ENCODE measurements at regions of chr3 and their contacts with region 1.

Region 1: DNA sequence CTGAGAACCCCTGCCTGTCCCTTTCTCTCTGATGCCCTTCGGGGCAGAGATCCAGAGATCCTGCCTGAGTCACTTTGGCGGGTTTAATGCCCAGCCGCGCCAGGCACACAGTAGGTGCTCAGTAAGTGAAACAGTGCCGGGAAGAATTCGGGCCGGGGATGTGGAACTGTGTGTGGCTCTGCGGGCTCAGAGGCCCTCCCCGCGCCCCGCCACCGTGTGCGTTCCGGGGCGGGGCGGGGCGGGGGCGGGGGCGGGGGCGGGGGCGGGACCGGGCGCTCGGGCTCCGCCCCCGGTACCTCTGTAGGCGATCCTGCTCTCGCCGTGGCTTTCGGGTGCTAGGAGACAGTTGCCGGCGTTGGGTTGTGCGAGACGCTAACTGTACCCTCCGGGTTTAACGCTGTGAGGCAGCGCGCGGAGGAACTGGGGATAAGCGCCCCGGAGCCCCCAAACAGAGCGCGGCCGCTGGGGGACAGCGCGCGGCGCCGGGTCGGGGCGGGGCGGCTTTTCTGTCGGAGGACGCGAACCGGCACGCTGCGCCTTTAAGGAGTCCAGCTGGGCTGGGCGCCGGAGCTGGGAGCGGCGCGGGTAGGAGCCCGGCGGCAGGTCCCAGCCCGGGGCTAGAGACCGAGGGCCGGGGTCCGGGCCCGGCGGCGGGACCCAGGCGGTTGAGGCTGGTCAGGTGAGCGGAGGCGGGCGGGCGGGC is at the start of gene ABHD6:
- DNase-seq: peak; percentile 79
- H3K4me3 Mint-ChIP-seq: peak within 1 kb of the TSS; percentile 97
- H3K27ac Mint-ChIP-seq: peak within 1 kb of the TSS; percentile 86
- H3K4me1 Mint-ChIP-seq: peaks cover 25% of the 10 kb centered on the region
- H3K27me3 Mint-ChIP-seq: peaks cover 16% of the 10 kb centered on the region
- total RNA-seq, gene ABHD6: 26.4 and 28.2 TPM in 2 replicates

Region 2: DNA sequence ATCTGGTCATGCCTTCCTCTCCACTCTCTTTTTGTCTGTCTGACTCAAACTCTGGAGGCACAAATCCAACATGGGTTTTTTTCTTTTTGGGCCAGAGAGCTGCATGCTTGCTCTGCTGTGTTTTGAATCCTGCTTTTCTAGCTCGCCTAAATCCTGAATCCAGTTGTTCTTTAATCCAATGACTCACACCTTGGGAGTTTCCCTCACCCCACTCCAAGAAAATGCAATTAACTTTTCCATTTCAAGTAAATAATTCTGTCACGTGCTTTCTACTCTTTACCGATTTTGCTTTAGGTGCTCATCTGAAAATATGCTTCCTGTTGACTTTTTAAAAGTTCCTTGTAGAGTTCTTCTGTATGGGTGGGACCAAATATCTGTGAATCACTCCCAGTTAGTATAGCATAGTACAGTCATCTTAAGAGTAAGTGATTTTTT is 433.7 kb before region 1 on chr3:
- intact Hi-C with region 1: no loop called
- DNase-seq: no peak
- H3K4me3 Mint-ChIP-seq: peak overlapping the region; percentile 49
- H3K27ac Mint-ChIP-seq: peak overlapping the region; percentile 83
- H3K4me1 Mint-ChIP-seq: peaks cover 45% of the 10 kb centered on the region
- H3K27me3 Mint-ChIP-seq: no peaks in the 10 kb centered on the region

Region 3: GRCh38 chr3:58188173-58188564 is 49.2 kb before region 1 on chr3:
- intact Hi-C with region 1: loop called (anchors 5 kb)
- DNase-seq: no peak
- H3K4me3 Mint-ChIP-seq: no peak overlapping the region
- H3K27ac Mint-ChIP-seq: no peak overlapping the region
- H3K4me1 Mint-ChIP-seq: peaks cover 3% of the 10 kb centered on the region
- H3K27me3 Mint-ChIP-seq: no peaks in the 10 kb centered on the region

Region 4: DNA sequence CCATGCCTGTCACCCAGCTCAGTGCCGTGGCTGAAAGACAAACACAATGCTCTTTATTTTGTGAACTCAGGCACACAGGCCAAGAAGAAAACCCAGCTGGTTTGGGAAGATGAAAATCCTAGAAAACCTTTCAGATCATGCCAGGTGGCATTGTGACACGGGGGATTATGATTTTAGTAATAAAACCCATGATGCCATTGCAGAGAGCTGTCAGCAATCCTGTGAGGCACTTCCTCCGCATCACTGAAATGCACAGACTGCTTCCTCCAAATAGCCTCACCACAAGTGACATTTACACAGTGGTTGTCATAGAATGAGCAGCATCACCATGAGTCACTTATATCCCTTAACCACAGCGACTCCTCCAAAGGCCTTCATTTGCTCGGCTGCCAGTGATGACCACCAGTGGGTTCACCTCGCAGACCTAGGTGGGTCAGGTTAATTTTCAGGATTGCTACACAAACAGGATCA is 22.9 kb after region 1 on chr3:
- intact Hi-C with region 1: loop called (anchors 1 kb)
- DNase-seq: no peak
- H3K4me3 Mint-ChIP-seq: no peak overlapping the region
- H3K27ac Mint-ChIP-seq: peak overlapping the region; percentile 85
- H3K4me1 Mint-ChIP-seq: peaks cover 43% of the 10 kb centered on the region
- H3K27me3 Mint-ChIP-seq: no peaks in the 10 kb centered on the region

Region 5: GRCh38 chr3:58305882-58306711 is 68.7 kb after region 1 on chr3 and contains the starts of genes HTD2 and RPP14:
- intact Hi-C with region 1: loop called (anchors 1 kb)
- DNase-seq: peak; percentile 97
- H3K4me3 Mint-ChIP-seq: peak within 1 kb of the TSS; percentile 91
- H3K27ac Mint-ChIP-seq: peak within 1 kb of the TSS; percentile 100
- H3K4me1 Mint-ChIP-seq: peaks cover 23% of the 10 kb centered on the region
- H3K27me3 Mint-ChIP-seq: no peaks in the 10 kb centered on the region
- total RNA-seq, gene HTD2: 10.1 and 10.5 TPM in 2 replicates
- total RNA-seq, gene RPP14: 21.8 and 23.8 TPM in 2 replicates

Region 6: DNA sequence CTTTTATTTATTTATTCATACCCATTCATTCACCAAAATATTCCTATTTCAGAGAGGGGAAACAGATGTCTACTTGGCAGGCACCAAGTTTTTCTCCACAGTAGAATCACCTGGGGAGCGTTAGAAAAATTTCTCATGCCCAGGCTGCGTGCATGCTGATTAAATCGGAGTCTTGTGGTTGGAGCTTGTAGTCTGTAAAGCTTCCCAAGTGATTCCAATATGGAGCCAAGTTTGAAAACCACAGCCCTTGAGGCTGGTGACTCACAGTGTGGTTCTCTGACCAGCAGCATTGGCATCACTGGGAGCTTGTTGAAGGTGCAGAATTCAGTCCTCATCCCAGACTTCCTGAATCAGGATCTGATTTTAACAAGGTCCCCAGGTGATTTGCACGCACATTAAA is 146.5 kb after region 1 on chr3:
- intact Hi-C with region 1: no loop called
- DNase-seq: no peak
- H3K4me3 Mint-ChIP-seq: no peak overlapping the region
- H3K27ac Mint-ChIP-seq: no peak overlapping the region
- H3K4me1 Mint-ChIP-seq: peaks cover 26% of the 10 kb centered on the region
- H3K27me3 Mint-ChIP-seq: no peaks in the 10 kb centered on the region

Region 7: GRCh38 chr3:58491506-58492402 is 254.4 kb after region 1 on chr3 and contains the start of gene KCTD6:
- intact Hi-C with region 1: loop called (anchors 10 kb)
- DNase-seq: peak; percentile 87
- H3K4me3 Mint-ChIP-seq: peak within 1 kb of the TSS; percentile 96
- H3K27ac Mint-ChIP-seq: peak within 1 kb of the TSS; percentile 84
- H3K4me1 Mint-ChIP-seq: peaks cover 37% of the 10 kb centered on the region
- H3K27me3 Mint-ChIP-seq: peaks cover 35% of the 10 kb centered on the region
- total RNA-seq, gene KCTD6: 7.2 and 8.7 TPM in 2 replicates

Measured in activated T-helper 2 cell treated with anti-CD3 and anti-CD28 coated beads, Interferon-gamma antibody, Interleukin-2, Interleukin-4, amounts not matched to agents 10 μg/mL and 5 μg/mL and 100 μg/mL, durations not matched to agents 14 hours and 24 hours and 36 hours (primary cell).